Posterior vena cava (tissue), 2 donors: ENCODE measurements at regions of chr20 and their contacts with region 1.

Region 1: DNA sequence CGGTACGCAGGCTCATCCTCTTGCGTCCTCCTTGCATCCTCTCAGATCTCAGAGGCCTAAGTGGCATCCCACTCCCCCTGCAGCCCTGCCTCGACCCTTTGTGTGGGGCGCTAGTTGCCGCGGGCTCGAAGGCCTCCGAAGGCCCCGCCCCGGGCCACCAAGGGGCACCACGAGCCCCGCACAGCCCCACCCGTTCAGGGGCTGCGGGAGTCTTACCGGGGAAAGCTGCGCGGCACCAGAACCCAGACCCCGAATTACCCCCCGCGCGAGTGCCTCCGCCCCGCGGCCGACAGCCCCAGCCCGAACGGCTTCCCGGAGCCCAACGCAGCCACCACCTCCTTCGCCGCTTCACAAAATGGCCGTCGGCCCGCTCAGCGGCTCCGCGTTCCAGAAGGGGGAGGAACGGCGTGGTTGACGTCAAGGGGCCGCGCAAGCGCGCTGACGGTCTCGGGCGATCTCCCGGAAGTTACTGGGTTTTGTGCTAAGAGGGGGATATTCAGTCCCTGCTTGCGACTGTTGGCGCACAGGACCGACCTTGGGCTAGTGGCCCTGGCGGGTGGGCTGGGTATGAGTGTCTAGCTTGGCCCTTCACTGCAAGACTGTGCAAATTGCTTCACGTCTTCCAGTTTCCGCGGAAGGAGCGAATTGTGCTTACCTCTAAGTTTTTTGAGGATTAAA is at the starts of genes CPNE1 and RBM12:
- DNase-seq: peak; percentile 98
- total RNA-seq, gene CPNE1: 122 to 130 TPM
- total RNA-seq, gene RBM12: 59.4 to 61.4 TPM

Region 2: DNA sequence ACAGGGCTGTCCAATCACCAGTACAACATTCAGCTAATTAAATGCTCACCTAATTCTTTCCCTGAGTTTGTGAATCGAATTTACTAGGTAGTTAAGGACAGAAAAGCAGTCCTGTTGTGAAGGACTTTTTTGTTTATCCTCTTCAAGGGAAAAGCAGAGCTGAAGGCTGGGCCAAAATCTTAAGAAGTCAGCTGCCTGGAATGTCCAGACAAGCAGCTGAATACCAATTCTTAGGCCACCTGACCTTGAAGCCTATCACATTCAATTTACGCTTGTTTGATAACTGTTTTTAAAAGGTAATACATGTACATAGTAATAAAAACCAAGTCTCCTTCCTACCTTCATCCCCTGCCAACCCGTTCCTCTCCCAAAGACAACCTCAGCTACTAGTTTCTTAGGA is 309.3 kb before region 1 on chr20:
- intact Hi-C with region 1: no loop called
- DNase-seq: no peak

Region 3: DNA sequence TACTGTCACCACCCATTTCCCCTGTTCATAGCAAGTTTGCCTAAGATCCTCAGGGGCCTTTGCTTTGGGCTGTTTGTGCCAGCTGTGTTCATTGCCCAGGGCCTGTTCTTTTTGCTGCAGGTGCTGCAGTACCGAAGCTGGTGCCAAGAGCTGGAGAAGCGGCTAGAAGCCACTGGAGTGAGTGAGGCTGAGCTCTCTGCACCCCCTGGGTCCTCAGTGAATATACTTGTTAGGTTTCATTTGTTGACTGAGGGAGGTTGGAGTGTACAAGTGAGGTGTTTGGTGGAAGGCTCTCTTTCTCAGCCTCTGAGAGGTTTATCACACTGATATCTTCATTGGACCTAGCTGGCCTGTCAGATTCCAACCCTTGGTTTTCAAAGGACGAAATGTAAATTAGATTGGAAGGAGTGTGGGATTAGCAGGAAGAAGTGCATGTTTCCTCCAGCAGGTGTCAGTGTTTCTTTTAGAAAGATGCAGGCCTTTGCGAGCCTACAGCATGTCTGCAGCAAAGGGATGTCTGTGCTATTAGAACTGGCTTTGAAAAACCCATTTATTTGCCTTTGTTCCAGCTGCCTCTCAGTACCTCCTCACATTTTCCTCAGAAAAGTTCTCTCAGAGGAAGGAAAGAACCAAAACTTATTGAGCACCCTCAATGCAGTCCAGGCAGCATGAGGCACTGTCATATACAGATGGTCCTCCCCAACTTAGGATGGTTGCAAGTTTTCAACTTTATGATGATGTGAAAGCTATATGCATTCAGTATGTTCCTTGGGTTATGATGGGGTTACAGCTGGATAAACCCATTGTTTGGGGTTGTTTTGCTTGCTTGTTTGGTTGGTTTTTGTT is 201.0 kb before region 1 on chr20:
- intact Hi-C with region 1: loop called in 1 of 2 experiments (anchors 10 kb)
- DNase-seq: no peak